Endothelial cell of umbilical vein (primary cell): ENCODE measurements at regions of chr15 and their contacts with region 1.

Region 1: GRCh38 chr15:38683382-38684242 is 119.0 kb upstream of the RASGRP1 start:
- DNase-seq: peak; percentile 59
- H3K4me3 ChIP-seq: no peak overlapping the region
- H3K27ac ChIP-seq: no peak overlapping the region
- H3K4me1 ChIP-seq: no peaks in the 10 kb centered on the region
- H3K27me3 ChIP-seq: peaks cover 17 to 20% of the 10 kb centered on the region in 2 experiments
- CTCF ChIP-seq: peak; percentile 63 to 64
- POLR2A ChIP-seq: no peak

Region 2: DNA sequence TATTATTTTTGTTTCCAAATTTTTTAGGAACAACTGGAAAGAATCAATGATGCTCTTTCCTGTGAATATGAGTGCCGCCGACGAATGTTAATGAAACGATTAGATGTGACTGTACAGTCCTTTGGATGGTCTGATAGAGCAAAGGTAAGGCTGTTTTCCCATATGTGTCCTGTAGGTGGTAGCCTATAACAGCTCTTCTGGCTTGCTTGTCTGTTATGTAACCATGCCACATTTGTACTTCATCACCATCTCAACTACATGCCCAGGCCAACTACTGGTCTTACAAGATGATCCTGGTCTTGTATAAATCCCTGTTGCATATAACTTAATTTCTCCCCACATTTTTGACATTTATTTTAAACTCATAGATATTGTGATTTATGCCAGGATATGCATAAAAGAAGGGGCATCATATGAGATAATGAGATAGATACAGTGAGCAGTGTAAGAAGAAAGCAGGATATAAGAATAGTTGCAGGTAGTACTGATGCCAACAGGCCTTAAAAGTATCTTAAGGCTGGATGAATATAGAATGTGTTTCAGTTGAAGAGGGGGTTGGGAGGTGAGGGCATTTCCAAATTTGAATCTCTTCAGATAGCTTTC is 209.4 kb before region 1 on chr15:
- CTCF ChIA-PET with region 1: interaction called, 37 read pairs
- POLR2A ChIA-PET with region 1: no interaction called
- dilution Hi-C with region 1: no loop called
- intact Hi-C with region 1: loop called (anchors 1 kb)
- DNase-seq: peak; percentile 72
- H3K4me3 ChIP-seq: no peak overlapping the region
- H3K27ac ChIP-seq: no peak overlapping the region
- H3K4me1 ChIP-seq: peaks cover 4% of the 10 kb centered on the region
- H3K27me3 ChIP-seq: no peaks in the 10 kb centered on the region
- CTCF ChIP-seq: peak; percentile 44 to 65
- POLR2A ChIP-seq: no peak

Region 3: GRCh38 chr15:38479266-38479665 is 204.3 kb before region 1 on chr15:
- CTCF ChIA-PET with region 1: interaction called, 37 read pairs
- POLR2A ChIA-PET with region 1: no interaction called
- dilution Hi-C with region 1: no loop called
- intact Hi-C with region 1: loop called (anchors 1 kb)
- DNase-seq: peak; percentile 5
- H3K4me3 ChIP-seq: no peak overlapping the region
- H3K27ac ChIP-seq: peak overlapping the region; percentile 60
- H3K4me1 ChIP-seq: peaks cover 19% of the 10 kb centered on the region
- H3K27me3 ChIP-seq: no peaks in the 10 kb centered on the region
- CTCF ChIP-seq: no peak
- POLR2A ChIP-seq: no peak

Region 4: DNA sequence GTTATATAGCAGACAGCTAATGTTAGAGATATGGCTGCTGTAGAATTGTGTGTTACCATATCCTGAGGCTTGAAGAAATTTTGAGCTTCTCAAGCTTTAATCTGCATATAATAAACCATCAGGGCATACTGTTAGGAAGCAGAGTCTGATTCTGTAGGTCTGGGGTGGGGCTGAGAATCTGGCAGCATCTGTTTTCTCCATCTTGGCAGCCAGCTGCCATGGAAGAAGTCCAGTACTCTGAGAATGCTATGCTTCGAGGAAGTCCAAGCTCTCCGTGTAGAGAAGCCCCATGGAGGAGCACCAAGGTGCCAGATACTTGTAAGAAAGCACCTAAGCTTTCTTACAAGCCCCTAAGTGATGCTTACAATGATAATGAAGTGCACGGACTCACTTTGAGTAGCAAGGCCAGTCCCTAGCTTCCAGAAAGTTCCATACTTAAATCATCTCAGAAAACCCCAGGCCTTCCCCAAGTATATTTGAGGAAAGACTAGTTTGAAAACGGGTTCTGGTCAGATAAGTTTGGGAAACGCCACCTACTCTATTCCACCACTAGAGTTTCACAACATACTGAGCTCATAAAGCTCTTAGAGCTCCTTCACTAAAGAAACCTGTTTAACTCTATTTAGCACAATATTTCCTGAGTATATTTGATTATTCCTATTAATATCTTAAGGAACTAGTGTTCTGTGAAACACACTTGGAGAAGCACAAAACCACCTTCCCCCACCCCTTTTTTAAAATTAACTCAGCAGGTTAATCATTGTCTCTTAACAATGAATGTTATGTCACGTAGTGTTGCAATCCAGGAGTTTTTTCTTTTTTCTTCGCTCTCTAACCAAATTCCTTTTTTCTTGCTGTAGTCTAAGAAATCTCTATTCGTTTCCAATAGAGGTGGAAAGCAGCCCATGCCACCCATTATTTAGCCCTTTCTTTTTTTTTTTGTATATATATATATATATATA is 59.1 kb before region 1 on chr15:
- CTCF ChIA-PET with region 1: no interaction called
- POLR2A ChIA-PET with region 1: no interaction called
- dilution Hi-C with region 1: no loop called
- intact Hi-C with region 1: no loop called
- DNase-seq: no peak
- H3K4me3 ChIP-seq: no peak overlapping the region
- H3K27ac ChIP-seq: no peak overlapping the region
- H3K4me1 ChIP-seq: no peaks in the 10 kb centered on the region
- H3K27me3 ChIP-seq: peaks cover 12 to 24% of the 10 kb centered on the region in 2 experiments
- CTCF ChIP-seq: no peak
- POLR2A ChIP-seq: no peak